Activated CD4-positive, alpha-beta memory T cell treated with anti-CD3 and anti-CD28 coated beads for 36 hours (primary cell): ENCODE measurements at regions of chr11 and their contacts with region 1.

Region 1: GRCh38 chr11:107770551-107770951 is 58.7 kb upstream of the SLN start:
- DNase-seq: peak; percentile 24
- H3K4me3 Mint-ChIP-seq: no peak overlapping the region
- H3K27ac Mint-ChIP-seq: peak overlapping the region; percentile 35
- H3K4me1 Mint-ChIP-seq: peaks cover 25% of the 10 kb centered on the region
- H3K27me3 Mint-ChIP-seq: peaks cover 13% of the 10 kb centered on the region

Region 2: GRCh38 chr11:107549253-107549953 is 221.1 kb before region 1 on chr11:
- CTCF ChIA-PET with region 1: interaction called, 12 read pairs
- POLR2A ChIA-PET with region 1: no interaction called
- intact Hi-C with region 1: no loop called
- DNase-seq: peak; percentile 40
- H3K4me3 Mint-ChIP-seq: no peak overlapping the region
- H3K27ac Mint-ChIP-seq: no peak overlapping the region
- H3K4me1 Mint-ChIP-seq: peaks cover 10% of the 10 kb centered on the region
- H3K27me3 Mint-ChIP-seq: no peaks in the 10 kb centered on the region

Region 3: GRCh38 chr11:107590460-107591377 is 179.8 kb before region 1 on chr11 and contains the start of gene ELMOD1:
- CTCF ChIA-PET with region 1: no interaction called
- POLR2A ChIA-PET with region 1: no interaction called
- intact Hi-C with region 1: loop called (anchors 1 kb)
- DNase-seq: peak; percentile 59
- H3K4me3 Mint-ChIP-seq: peak within 1 kb of the TSS; percentile 76
- H3K27ac Mint-ChIP-seq: no peak within 1 kb of the TSS
- H3K4me1 Mint-ChIP-seq: peaks cover 26% of the 10 kb centered on the region
- H3K27me3 Mint-ChIP-seq: peaks cover 77% of the 10 kb centered on the region
- total RNA-seq, gene ELMOD1: 0.12 TPM in 1 of 2 experiments, not detected in the other

Region 4: GRCh38 chr11:107719557-107720302 is 50.8 kb before region 1 on chr11:
- CTCF ChIA-PET with region 1: no interaction called
- POLR2A ChIA-PET with region 1: no interaction called
- intact Hi-C with region 1: no loop called
- DNase-seq: no peak
- H3K4me3 Mint-ChIP-seq: no peak overlapping the region
- H3K27ac Mint-ChIP-seq: no peak overlapping the region
- H3K4me1 Mint-ChIP-seq: no peaks in the 10 kb centered on the region
- H3K27me3 Mint-ChIP-seq: peaks cover 10% of the 10 kb centered on the region

Region 5: DNA sequence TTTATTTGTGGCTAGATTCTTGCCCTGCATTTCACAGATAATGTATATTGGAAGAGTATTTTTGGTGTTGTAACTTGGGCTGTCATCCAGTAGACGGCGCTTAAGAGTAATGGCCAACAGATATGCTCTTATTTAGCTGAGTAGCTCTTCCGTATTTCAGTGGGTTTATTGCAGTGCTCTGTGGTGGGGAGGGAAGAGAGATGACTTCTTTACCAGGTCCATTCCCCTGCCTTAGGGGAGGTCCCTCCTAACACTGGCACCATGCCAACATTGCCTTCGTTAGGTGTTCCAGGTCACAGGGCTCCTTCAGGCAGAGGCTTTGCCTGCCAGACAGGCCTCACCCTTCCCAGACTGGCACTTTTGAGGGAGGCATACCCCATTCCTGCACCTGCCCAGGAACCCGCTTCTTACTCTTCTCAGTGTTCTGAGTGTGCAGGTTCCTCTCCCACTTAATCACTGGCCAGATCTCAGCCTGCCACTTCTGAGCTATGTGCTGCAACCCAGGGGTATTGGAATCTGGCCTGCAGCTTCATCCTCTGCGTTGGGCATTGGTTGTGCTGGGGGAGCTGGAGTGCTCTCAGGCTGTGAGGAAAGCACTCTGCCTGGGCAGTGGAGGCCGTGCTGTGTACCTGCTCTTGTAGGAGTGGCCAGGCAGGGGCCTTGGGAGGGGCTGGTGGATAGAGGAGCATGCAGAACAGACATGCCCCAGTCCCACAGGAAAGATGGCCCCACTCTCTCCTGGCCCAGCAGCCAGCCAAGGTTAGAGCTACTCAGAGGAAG is 29.3 kb before region 1 on chr11:
- CTCF ChIA-PET with region 1: interaction called, 26 read pairs
- POLR2A ChIA-PET with region 1: no interaction called
- intact Hi-C with region 1: loop called (anchors 1 kb)
- DNase-seq: peak; percentile 26
- H3K4me3 Mint-ChIP-seq: no peak overlapping the region
- H3K27ac Mint-ChIP-seq: no peak overlapping the region
- H3K4me1 Mint-ChIP-seq: no peaks in the 10 kb centered on the region
- H3K27me3 Mint-ChIP-seq: peaks cover 18% of the 10 kb centered on the region

Region 6: GRCh38 chr11:107840129-107840484 is 69.6 kb after region 1 on chr11:
- CTCF ChIA-PET with region 1: interaction called, 3 read pairs
- POLR2A ChIA-PET with region 1: no interaction called
- intact Hi-C with region 1: loop called (anchors 1 kb)
- DNase-seq: no peak
- H3K4me3 Mint-ChIP-seq: peak overlapping the region; percentile 53
- H3K27ac Mint-ChIP-seq: peak overlapping the region; percentile 98
- H3K4me1 Mint-ChIP-seq: peaks cover 71% of the 10 kb centered on the region
- H3K27me3 Mint-ChIP-seq: no peaks in the 10 kb centered on the region